CD8-positive, alpha-beta T cell (primary cell): ENCODE measurements at regions of chr13 and their contacts with region 1.

Region 1: DNA sequence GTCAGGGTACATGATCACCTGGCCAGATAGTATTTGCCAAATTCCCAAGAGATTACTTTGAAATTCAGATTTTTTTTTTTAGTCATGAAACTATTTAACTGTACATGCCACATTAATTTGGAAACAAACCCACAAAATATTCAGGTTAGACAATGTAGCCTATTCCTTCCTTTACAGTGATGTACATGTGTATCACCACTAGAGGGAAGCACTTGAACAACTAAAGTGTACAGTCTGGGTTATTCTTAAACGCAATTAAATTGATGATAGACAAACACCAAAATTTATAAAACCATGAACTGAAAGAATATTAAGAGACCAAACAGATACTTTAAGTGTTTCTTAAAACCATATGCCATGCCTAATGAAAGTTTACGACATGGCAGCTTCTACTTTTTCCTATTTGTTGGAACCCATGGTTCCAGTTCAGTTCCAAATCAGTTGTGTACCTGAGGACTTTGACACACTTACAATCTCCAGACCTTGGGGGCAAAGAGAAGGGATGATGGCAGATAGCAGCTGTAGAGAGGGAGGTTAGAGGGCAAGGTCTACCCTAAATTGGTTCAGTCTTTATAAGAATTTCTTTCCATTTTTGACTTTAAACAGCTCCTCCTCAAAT is 52.8 kb downstream of the TNFSF13B start:
- DNase-seq: peak in 2 of 9 experiments; percentile 38 to 48
- ATAC-seq: peak; percentile 72
- H3K4me3 ChIP-seq: no peak overlapping the region
- H3K4me3 Mint-ChIP-seq: no peak overlapping the region
- H3K27ac ChIP-seq: no peak overlapping the region
- H3K27ac Mint-ChIP-seq: no peak overlapping the region
- H3K4me1 ChIP-seq: no peaks in the 10 kb centered on the region
- H3K4me1 Mint-ChIP-seq: peaks cover 5% of the 10 kb centered on the region
- H3K27me3 ChIP-seq: no peaks in the 10 kb centered on the region
- H3K27me3 Mint-ChIP-seq: peaks cover 5% of the 10 kb centered on the region
- CTCF ChIP-seq: peak; percentile 82

Region 2: GRCh38 chr13:108508263-108508662 is 185.9 kb after region 1 on chr13:
- CTCF ChIA-PET with region 1: no interaction called
- POLR2A ChIA-PET with region 1: no interaction called
- intact Hi-C with region 1: loop called (anchors 5 kb)
- DNase-seq: peak in 2 of 9 experiments; percentile 6 to 24
- ATAC-seq: no peak
- H3K4me3 ChIP-seq: no peak overlapping the region
- H3K4me3 Mint-ChIP-seq: no peak overlapping the region
- H3K27ac ChIP-seq: no peak overlapping the region
- H3K27ac Mint-ChIP-seq: no peak overlapping the region
- H3K4me1 ChIP-seq: no peaks in the 10 kb centered on the region
- H3K4me1 Mint-ChIP-seq: no peaks in the 10 kb centered on the region
- H3K27me3 ChIP-seq: no peaks in the 10 kb centered on the region
- H3K27me3 Mint-ChIP-seq: no peaks in the 10 kb centered on the region
- CTCF ChIP-seq: no peak

Region 3: GRCh38 chr13:108895220-108895704 is 572.9 kb after region 1 on chr13:
- CTCF ChIA-PET with region 1: interaction called, 3 read pairs
- POLR2A ChIA-PET with region 1: interaction called, 3 read pairs
- intact Hi-C with region 1: loop called (anchors 1 to 2 kb)
- DNase-seq: peak in 2 of 9 experiments; percentile 11 to 20
- ATAC-seq: no peak
- H3K4me3 ChIP-seq: no peak overlapping the region
- H3K4me3 Mint-ChIP-seq: no peak overlapping the region
- H3K27ac ChIP-seq: no peak overlapping the region
- H3K27ac Mint-ChIP-seq: no peak overlapping the region
- H3K4me1 ChIP-seq: no peaks in the 10 kb centered on the region
- H3K4me1 Mint-ChIP-seq: peaks cover 7% of the 10 kb centered on the region
- H3K27me3 ChIP-seq: no peaks in the 10 kb centered on the region
- H3K27me3 Mint-ChIP-seq: no peaks in the 10 kb centered on the region
- CTCF ChIP-seq: peak; percentile 52

Region 4: GRCh38 chr13:109113427-109113826 is 791.1 kb after region 1 on chr13:
- CTCF ChIA-PET with region 1: no interaction called
- POLR2A ChIA-PET with region 1: no interaction called
- intact Hi-C with region 1: no loop called
- DNase-seq: no peak
- ATAC-seq: no peak
- H3K4me3 ChIP-seq: no peak overlapping the region
- H3K4me3 Mint-ChIP-seq: no peak overlapping the region
- H3K27ac ChIP-seq: no peak overlapping the region
- H3K27ac Mint-ChIP-seq: no peak overlapping the region
- H3K4me1 ChIP-seq: no peaks in the 10 kb centered on the region
- H3K4me1 Mint-ChIP-seq: no peaks in the 10 kb centered on the region
- H3K27me3 ChIP-seq: no peaks in the 10 kb centered on the region
- H3K27me3 Mint-ChIP-seq: peaks cover 5% of the 10 kb centered on the region
- CTCF ChIP-seq: no peak